Posterior cingulate gyrus (tissue), 11 donors: ENCODE measurements at regions of chr6 and their contacts with region 1.

Region 1: DNA sequence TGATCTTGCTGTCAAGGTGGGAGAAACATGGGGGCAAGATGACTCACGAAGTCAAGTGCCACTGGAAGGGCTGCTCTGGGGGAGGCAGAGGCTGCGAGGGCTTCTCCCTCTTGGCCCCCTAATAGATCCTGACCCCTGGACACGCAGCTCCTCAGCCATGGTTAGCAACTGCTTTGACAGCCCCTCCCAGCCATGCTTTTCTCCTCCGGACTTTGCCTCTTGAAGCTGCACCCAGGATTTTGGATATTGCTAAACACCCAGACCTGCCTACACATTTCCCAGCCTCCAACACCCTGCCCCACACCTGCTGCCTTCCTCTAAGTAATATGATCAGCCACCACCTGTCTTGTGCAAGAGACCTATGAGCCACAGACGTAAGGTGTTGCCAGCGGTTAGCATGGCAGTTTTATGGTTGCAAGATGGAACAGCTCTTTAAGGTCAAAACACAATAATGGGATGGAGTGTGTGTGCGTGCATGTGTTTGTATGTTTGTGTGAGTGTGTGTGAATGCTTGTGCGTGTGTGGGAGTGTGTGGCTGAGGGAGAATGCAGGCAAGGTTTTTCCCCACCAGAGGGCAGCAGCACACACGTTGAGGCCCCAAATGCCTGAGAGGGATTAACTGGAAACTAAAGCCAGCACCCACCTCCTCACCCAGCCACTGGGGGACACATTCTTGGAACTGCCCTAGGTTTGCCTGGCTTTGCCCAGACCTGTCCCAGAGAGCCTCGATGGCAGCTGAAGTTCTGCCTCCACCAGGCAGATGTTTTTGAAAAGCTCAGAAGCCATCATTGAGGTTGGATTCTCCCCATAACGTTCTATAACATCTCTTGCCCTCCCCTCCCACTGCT is 2.5 kb downstream of the IP6K3 start:
- DNase-seq: peak; percentile 53 to 95 (median 82)

Region 2: DNA sequence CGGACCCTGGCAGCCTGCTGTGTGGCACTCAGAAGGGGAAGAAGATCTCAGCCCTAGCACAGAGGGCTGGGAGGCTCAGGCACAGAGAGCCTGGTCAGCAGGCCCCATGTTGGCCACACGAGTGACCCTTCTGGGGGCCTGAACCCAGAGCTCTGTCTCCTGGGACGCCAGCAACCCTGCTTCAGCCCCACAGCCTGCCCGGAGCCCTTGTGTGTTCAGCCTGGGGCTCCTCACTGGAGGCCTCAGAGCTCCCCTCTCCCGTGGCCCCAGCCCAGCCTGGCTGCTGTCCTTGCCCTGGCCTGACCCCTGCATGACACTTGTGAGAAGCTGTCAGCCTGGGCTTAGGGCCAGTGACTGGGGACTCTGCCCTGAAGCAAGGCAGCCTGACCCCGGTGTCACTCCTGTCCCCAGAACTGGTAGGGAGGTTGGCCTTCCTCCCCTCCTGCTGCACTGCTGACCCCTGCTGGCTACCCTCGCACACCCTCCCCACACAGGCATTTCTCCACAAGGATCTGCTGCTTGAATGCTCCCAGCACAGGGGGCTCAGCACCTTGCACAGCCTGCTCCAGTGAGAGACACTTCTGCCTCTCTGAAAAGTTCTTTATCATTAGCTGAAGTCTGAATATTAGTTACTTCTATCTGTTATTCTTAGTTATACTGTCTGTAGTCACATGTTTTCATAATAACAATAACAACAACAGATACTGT is 17.9 kb after region 1 on chr6:
- intact Hi-C with region 1: loop called (anchors 1 kb)
- DNase-seq: peak in 9 of 10 donors; percentile 46 to 94 (median 75)

Region 3: GRCh38 chr6:33794891-33795623 is 50.8 kb after region 1 on chr6:
- intact Hi-C with region 1: no loop called
- DNase-seq: peak in 2 of 10 donors; percentile 22 to 49